AG04450 (cell line): ENCODE measurements at regions of chr5 and their contacts with region 1.

Region 1: GRCh38 chr5:139410993-139411828 is 7.3 kb upstream of the SPATA24 start:
- DNase-seq: no peak
- H3K4me3 ChIP-seq: no peak overlapping the region
- H3K27ac ChIP-seq: no peak overlapping the region
- H3K27me3 ChIP-seq: no peaks in the 10 kb centered on the region
- CTCF ChIP-seq: no peak

Region 2: GRCh38 chr5:138932171-138932810 is 478.9 kb before region 1 on chr5:
- CTCF ChIA-PET with region 1: no interaction called
- POLR2A ChIA-PET with region 1: no interaction called
- DNase-seq: no peak
- H3K4me3 ChIP-seq: no peak overlapping the region
- H3K27ac ChIP-seq: no peak overlapping the region
- H3K27me3 ChIP-seq: no peaks in the 10 kb centered on the region
- CTCF ChIP-seq: no peak

Region 3: GRCh38 chr5:139439013-139439903 is 28.0 kb after region 1 on chr5 and contains the start of gene DNAJC18:
- CTCF ChIA-PET with region 1: no interaction called
- POLR2A ChIA-PET with region 1: no interaction called
- DNase-seq: peak; percentile 78
- H3K4me3 ChIP-seq: peak within 1 kb of the TSS; percentile 95
- H3K27ac ChIP-seq: peak within 1 kb of the TSS; percentile 89
- H3K27me3 ChIP-seq: no peaks in the 10 kb centered on the region
- CTCF ChIP-seq: no peak
- polyA plus RNA-seq, gene DNAJC18: 12.7 and 17.7 TPM in 2 replicates

Region 4: GRCh38 chr5:139517683-139518564 is 106.7 kb after region 1 on chr5:
- CTCF ChIA-PET with region 1: interaction called, 10 read pairs
- POLR2A ChIA-PET with region 1: no interaction called
- DNase-seq: peak; percentile 47
- H3K4me3 ChIP-seq: peak overlapping the region; percentile 64
- H3K27ac ChIP-seq: peak overlapping the region; percentile 52
- H3K27me3 ChIP-seq: no peaks in the 10 kb centered on the region
- CTCF ChIP-seq: peak; percentile 89